ENCODE measurements at regions of chr7 and their contacts with region 1.

Region 1: DNA sequence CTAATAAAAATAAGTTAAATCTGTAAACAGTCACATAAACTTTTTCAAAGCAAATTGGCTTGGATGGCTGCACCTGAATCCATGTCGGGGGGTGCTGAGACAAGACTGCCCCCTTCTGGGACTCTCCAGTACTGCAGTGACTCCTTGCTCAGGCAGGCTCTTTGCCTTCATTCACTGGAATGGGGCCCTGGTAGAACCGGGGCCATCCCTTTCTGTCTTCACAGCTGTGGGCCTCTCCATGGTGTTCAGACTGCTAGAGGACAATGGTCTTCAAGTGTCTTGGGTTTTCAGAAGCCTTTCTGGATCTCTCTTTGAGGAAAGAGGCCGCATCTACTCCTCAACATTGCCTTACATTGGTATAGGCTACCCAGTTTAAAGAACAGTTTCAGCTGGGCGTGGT is 16.1 kb upstream of the IMPDH1 start:
- DNase-seq: peak; percentile 69
- H3K4me3 ChIP-seq: no peak overlapping the region
- H3K27ac ChIP-seq: no peak overlapping the region
- H3K4me1 ChIP-seq: no peaks in the 10 kb centered on the region
- H3K27me3 ChIP-seq: no peaks in the 10 kb centered on the region
- CTCF ChIP-seq: peak; percentile 87 to 93
- POLR2A ChIP-seq: no peak

Region 2: GRCh38 chr7:128259131-128259800 is 166.6 kb before region 1 on chr7:
- CTCF ChIA-PET with region 1: no interaction called
- POLR2A ChIA-PET with region 1: no interaction called
- dilution Hi-C with region 1: no loop called
- intact Hi-C with region 1: no loop called
- DNase-seq: no peak
- H3K4me3 ChIP-seq: no peak overlapping the region
- H3K27ac ChIP-seq: no peak overlapping the region
- H3K4me1 ChIP-seq: no peaks in the 10 kb centered on the region
- H3K27me3 ChIP-seq: peaks cover 5 to 7% of the 10 kb centered on the region in 2 experiments
- CTCF ChIP-seq: no peak
- POLR2A ChIP-seq: no peak

Region 3: GRCh38 chr7:128352153-128352537 is 73.7 kb before region 1 on chr7:
- CTCF ChIA-PET with region 1: interaction called, 96 read pairs
- POLR2A ChIA-PET with region 1: no interaction called
- dilution Hi-C with region 1: no loop called
- intact Hi-C with region 1: loop called (anchors 1 kb)
- DNase-seq: peak; percentile 72
- H3K4me3 ChIP-seq: no peak overlapping the region
- H3K27ac ChIP-seq: no peak overlapping the region
- H3K4me1 ChIP-seq: no peaks in the 10 kb centered on the region
- H3K27me3 ChIP-seq: peaks cover 46 to 51% of the 10 kb centered on the region in 2 experiments
- CTCF ChIP-seq: peak; percentile 74 to 91
- POLR2A ChIP-seq: no peak

Region 4: DNA sequence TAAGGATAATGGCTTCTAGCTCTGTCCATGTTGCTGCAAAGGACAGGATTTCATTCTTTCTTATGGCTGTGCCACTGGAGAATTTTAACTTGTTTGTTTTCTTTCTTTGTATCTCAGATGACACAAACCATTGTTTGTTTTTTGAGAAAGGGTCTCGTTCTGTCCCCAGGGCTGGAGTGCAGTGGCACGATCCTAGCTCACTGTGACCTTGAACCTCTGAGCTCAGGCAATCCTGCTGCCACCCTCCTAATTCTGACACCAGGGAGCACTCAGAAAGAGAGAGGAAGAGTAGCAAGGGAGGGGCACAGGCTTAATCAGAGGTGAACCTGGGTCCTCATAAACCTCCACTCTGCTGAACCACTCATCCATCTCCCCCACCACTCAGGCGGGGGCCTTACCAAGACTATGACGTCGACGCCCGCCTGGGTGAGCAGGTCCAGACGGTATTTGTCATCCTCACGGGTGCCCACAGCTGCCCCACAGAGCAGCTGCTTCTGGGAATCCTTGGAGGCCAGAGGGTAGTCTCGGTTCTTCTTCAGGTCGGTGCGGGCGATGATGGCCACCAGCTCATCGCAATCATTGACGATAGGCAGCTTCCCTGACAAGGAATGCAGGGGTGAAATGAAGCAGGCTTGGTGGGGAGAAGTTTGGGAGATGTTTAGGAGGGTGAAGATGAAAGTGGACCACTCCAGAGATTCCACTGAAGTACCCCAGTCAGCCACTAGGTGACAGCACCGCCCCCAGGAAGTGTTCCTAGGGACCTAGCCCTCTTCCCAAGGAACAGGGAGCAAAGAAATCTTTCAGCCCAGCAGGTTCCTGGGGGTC is 27.6 kb before region 1 on chr7:
- CTCF ChIA-PET with region 1: interaction called, 209 read pairs
- POLR2A ChIA-PET with region 1: interaction called, 4 read pairs
- dilution Hi-C with region 1: no loop called
- intact Hi-C with region 1: loop called (anchors 1 kb)
- DNase-seq: peak; percentile 42
- H3K4me3 ChIP-seq: no peak overlapping the region
- H3K27ac ChIP-seq: no peak overlapping the region
- H3K4me1 ChIP-seq: no peaks in the 10 kb centered on the region
- H3K27me3 ChIP-seq: no peaks in the 10 kb centered on the region
- CTCF ChIP-seq: peak; percentile 80 to 92
- POLR2A ChIP-seq: no peak

Region 5: DNA sequence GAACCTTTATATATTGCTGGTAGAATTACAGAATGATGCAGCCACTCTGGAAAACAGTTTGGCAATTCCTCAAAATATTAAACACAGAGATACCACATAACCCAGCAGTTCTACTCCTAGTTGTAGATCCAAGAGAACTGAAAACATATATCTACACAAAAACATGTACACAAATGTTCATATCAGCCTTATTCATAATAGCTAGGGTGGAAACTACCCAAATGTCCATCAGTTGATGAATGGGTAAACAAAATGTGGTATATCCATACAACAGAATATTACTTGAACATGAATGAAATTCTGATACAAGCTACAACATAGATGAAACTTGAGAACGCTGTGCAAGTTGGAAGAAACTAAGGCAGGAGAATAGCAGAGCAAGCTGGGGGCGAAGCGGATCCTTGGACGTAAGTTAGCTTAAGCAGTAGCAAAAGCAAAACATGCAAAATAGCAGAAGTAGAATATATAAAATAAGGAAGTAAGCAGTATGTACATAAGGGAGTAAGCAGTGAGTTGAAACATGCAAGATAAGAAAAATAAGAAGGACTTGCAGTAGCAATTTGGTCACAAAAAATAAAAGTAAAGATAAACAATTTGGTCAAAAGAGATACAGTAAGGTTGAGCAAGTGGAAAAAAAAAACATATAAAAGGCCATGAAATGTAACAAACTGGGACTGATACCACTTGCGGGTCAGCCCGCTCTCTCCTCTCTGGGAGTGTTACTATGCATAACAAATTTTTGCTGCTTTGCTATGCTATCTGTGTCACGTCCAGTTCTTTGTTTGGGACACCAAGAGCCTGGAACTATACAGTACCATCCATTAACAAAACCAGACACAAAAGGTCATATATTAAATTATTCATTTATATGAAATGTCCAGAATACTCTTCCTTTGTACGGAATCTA is 11.8 kb after region 1 on chr7:
- CTCF ChIA-PET with region 1: interaction called, 39 read pairs
- POLR2A ChIA-PET with region 1: no interaction called
- dilution Hi-C with region 1: no loop called
- intact Hi-C with region 1: no loop called
- DNase-seq: no peak
- H3K4me3 ChIP-seq: no peak overlapping the region
- H3K27ac ChIP-seq: no peak overlapping the region
- H3K4me1 ChIP-seq: no peaks in the 10 kb centered on the region
- H3K27me3 ChIP-seq: peaks cover 12% of the 10 kb centered on the region in 2 experiments
- CTCF ChIP-seq: no peak
- POLR2A ChIP-seq: no peak

Region 6: DNA sequence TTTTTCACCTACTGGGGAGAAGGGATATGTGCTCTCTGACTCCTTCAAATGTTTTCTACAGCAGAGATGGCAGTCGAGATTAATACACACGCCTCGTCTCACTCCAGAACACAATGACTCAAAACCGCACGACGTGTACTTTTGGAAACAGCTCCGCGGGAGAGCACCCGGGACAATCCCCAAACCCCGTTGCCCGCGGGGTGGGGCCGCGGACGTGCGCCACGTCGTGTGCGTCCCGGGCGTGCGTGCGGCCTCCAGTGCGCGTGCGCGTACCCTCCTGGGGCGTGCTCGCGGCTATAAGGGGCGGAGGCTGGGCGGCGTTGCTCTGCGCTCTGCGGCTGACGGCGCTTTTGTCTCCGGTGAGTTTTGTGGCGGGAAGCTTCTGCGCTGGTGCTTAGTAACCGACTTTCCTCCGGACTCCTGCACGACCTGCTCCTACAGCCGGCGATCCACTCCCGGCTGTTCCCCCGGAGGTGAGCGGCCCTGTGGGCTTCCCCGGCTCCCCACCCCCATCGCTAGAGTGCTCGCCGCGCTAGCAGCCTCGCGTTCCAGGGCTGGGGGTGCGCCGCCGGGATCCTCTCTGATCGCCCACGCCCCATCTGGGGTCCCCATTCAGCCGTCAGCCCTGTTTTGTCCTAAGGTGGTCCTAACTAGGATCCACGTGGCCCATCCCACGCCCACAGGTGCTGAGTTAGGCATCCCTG is 29.9 kb after region 1 on chr7 and contains the start of gene HILPDA:
- CTCF ChIA-PET with region 1: interaction called, 632 read pairs
- POLR2A ChIA-PET with region 1: interaction called, 6 read pairs
- dilution Hi-C with region 1: no loop called
- intact Hi-C with region 1: loop called (anchors 1 kb)
- DNase-seq: peak; percentile 90
- H3K4me3 ChIP-seq: peak within 1 kb of the TSS; percentile 16 to 77 (median 60)
- H3K27ac ChIP-seq: peak within 1 kb of the TSS; percentile 31
- H3K4me1 ChIP-seq: peaks cover 29% of the 10 kb centered on the region
- H3K27me3 ChIP-seq: peaks cover 2 to 12% of the 10 kb centered on the region in 2 experiments
- CTCF ChIP-seq: no peak
- POLR2A ChIP-seq: peak; percentile 95
- total RNA-seq, gene HILPDA: 14.1 and 14.4 TPM in 2 replicates

Region 7: DNA sequence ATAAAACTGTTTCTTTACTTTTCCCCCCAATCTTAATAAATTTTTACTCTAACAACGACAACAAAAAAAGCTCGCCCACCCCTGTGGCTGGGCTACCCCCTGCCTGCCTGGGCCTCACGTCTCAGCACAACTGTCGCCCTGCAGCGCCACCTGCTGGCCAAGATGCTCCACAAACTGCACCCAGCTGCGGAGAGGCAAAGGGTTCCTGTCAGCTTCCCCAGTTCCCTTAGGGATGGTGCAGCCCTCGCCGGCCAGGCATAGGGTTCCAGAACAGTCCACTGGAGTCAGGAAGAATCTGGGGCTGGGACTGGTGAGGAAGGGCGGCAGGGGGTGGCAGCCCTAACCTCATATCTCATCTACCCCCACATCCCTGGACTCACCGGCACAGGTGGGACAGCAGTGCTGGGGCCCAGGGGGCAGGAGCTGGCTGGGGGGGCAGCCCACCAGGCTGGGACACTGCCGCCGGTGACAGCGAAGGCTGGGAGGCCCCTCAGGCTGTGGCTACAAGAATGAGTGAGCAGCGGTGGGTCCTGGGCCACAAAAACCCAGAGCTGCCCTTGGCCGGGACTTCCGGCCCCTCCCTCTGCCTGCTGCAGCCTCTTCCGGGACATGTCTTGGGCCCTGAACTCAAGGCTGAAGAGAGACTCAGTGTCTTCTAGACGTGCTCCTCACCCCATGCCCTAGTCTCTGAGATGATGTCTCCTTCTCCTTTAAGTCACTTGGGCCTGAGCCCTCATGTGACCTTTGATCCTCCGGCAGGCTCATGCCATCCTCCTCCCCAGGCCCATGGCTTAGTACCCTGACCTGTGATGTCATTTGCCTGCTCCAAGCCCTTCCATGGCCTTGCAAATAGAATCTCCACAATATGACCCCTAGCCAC is 458.0 kb after region 1 on chr7:
- CTCF ChIA-PET with region 1: interaction called, 28 read pairs
- POLR2A ChIA-PET with region 1: interaction called, 3 read pairs
- dilution Hi-C with region 1: no loop called
- intact Hi-C with region 1: loop called (anchors 5 kb)
- DNase-seq: peak; percentile 61
- H3K4me3 ChIP-seq: no peak overlapping the region
- H3K27ac ChIP-seq: no peak overlapping the region
- H3K4me1 ChIP-seq: no peaks in the 10 kb centered on the region
- H3K27me3 ChIP-seq: no peaks in the 10 kb centered on the region
- CTCF ChIP-seq: peak; percentile 90 to 92
- POLR2A ChIP-seq: no peak